ENCODE measurements at regions of chr19 and their contacts with region 1.

Region 1: GRCh38 chr19:28737021-28737895 is 475.7 kb downstream of the UQCRFS1 start:
- DNase-seq: no peak
- H3K4me3 ChIP-seq: peak overlapping the region in 1 of 8 donors; percentile 19
- H3K27ac ChIP-seq: peak overlapping the region in 4 of 8 donors; percentile 51 to 73 (median 66)
- H3K4me1 ChIP-seq: peaks cover 0 to 9% (median 3%) of the 10 kb centered on the region in 6 donors
- H3K27me3 ChIP-seq: no peaks in the 10 kb centered on the region
- CTCF ChIP-seq: peak in 9 of 11 experiments; percentile 30 to 77 (median 52)
- POLR2A ChIP-seq: no peak

Region 2: DNA sequence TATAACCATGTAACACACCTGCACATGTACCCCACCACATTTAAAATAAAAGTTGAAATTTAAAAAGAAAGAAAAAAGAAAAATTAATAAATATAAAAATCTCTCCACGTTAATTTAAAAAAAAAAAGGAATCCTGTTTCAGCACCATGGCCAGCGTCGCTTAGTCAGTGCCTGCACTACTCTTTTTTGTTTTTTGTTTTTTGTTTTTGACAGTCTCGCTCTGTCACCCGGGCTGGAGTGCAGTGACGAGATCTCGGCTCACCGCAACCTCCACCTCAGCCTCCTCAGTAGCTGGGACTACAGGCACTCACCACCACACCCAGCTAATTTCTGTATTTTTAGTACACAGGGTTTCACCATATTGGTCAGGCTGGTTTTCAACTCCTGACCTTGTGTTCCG is 360.2 kb before region 1 on chr19:
- intact Hi-C with region 1: no loop called
- DNase-seq: no peak
- H3K4me3 ChIP-seq: no peak overlapping the region
- H3K27ac ChIP-seq: no peak overlapping the region
- H3K4me1 ChIP-seq: no peaks in the 10 kb centered on the region
- H3K27me3 ChIP-seq: no peaks in the 10 kb centered on the region
- CTCF ChIP-seq: no peak
- POLR2A ChIP-seq: no peak

Region 3: DNA sequence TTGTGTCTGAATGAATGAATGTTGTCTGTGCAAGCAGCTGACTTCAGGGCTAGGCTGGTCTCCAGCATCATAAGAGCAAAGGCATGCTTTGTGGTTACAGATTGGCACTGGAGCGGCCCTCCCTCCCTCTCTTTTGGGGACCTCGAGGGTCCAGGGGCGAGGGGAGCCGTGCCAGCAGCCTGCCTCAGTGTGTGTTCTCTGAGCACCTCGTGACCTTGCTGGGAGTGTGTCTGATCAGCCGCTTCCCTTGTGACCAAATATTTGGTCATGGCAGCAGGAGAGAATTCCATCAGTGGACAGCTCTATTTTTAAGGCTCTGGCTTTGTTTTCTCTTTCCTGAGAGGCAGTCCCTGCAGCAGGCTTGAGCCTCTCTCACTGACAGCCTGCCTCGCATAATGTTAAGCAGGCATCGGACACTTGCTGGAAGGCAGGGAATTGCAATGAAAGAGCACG is 146.0 kb after region 1 on chr19:
- intact Hi-C with region 1: loop called (anchors 5 kb)
- DNase-seq: no peak
- H3K4me3 ChIP-seq: no peak overlapping the region
- H3K27ac ChIP-seq: no peak overlapping the region
- H3K4me1 ChIP-seq: no peaks in the 10 kb centered on the region
- H3K27me3 ChIP-seq: peaks cover 0 to 60% (median 0%) of the 10 kb centered on the region in 7 donors
- CTCF ChIP-seq: no peak
- POLR2A ChIP-seq: no peak

Region 4: DNA sequence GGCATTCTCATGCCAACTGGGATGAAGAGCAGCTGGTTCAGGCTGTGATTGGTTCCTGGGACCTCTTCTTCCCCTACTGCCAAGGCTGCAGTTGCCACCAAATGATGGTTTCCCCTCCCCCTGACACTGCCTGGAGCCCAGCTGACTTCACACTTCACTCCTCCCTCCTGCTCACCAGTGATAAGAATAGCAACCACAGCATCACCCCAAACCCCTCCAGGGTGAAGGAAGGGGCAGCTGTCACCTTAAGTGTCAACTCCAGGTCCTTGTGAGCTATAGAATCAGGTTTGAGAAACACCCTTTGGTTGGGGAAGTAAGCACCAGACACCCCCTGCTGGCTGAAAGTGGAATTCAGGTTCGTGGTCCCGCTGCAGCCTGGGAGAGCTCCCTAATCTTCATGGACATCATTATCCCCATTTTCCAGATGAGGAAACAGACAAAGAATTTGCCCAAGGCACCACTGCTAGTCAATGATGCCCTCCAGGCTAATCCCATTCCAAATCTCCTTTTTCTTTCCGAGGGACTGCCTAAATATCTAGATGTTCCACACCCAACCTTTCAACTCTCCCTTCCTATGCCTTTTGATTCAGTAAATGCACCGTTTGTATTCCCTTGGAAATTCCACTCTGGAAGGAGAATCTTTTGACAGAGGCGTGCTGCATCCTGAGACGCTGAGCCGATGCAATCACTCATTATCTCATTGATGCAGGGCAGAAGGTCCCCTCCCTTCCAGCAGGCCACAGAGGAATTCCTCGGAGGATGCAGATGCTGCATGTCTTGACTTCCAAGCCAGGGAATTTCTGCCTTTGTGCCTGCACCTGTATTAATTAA is 526.3 kb after region 1 on chr19:
- intact Hi-C with region 1: loop called (anchors 5 kb)
- DNase-seq: no peak
- H3K4me3 ChIP-seq: no peak overlapping the region
- H3K27ac ChIP-seq: no peak overlapping the region
- H3K4me1 ChIP-seq: peaks cover 0 to 3% (median 0%) of the 10 kb centered on the region in 6 donors
- H3K27me3 ChIP-seq: peaks cover 0 to 53% (median 0%) of the 10 kb centered on the region in 7 donors
- CTCF ChIP-seq: peak in 10 of 11 experiments; percentile 24 to 82 (median 64)
- POLR2A ChIP-seq: no peak

Measured in spleen (tissue), 13 donors.